Ascending aorta (tissue), 2 donors: ENCODE measurements at regions of chr6 and their contacts with region 1.

Region 1: GRCh38 chr6:158231551-158232315 is 63.6 kb downstream of the GTF2H5 start:
- DNase-seq: peak in 1 of 2 donors; percentile 85
- H3K4me3 ChIP-seq: peak overlapping the region; percentile 84 to 87
- H3K27ac ChIP-seq: peak overlapping the region; percentile 85 to 94
- H3K4me1 ChIP-seq: peaks cover 0 to 5% of the 10 kb centered on the region in 2 donors
- H3K27me3 ChIP-seq: no peaks in the 10 kb centered on the region
- CTCF ChIP-seq: no peak

Region 2: GRCh38 chr6:158170656-158171081 is 61.1 kb before region 1 on chr6:
- intact Hi-C with region 1: loop called (anchors 5 kb)
- DNase-seq: no peak
- H3K4me3 ChIP-seq: peak overlapping the region in 1 of 2 donors; percentile 40
- H3K27ac ChIP-seq: peak overlapping the region; percentile 77 to 80
- H3K4me1 ChIP-seq: peaks cover 11 to 52% of the 10 kb centered on the region in 2 donors
- H3K27me3 ChIP-seq: no peaks in the 10 kb centered on the region
- CTCF ChIP-seq: no peak

Region 3: DNA sequence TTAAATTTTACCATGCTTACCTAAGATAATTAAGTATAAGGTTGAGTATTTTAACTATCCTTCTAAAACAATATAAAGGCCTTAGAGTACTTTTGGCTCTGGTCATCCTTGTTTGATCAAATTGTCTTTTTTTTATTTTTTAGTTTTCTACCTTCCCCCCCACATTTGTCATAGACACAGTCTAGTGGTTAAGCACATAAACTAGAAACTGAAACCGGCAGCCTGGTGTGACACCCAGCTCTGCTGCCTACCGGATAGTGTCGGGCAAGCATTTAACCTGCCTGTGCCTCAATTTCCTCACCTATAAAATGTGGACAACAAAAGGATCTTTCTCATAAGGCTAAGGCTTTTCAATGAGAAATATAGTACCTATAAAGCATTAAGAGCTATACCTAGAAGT is 58.9 kb after region 1 on chr6:
- intact Hi-C with region 1: loop called (anchors 5 kb)
- DNase-seq: no peak
- H3K4me3 ChIP-seq: no peak overlapping the region
- H3K27ac ChIP-seq: no peak overlapping the region
- H3K4me1 ChIP-seq: peaks cover under 1 to 7% of the 10 kb centered on the region in 2 donors
- H3K27me3 ChIP-seq: no peaks in the 10 kb centered on the region
- CTCF ChIP-seq: no peak

Region 4: GRCh38 chr6:158313989-158314388 is 82.3 kb after region 1 on chr6:
- intact Hi-C with region 1: no loop called
- DNase-seq: no peak
- H3K4me3 ChIP-seq: no peak overlapping the region
- H3K27ac ChIP-seq: no peak overlapping the region
- H3K4me1 ChIP-seq: no peaks in the 10 kb centered on the region
- H3K27me3 ChIP-seq: no peaks in the 10 kb centered on the region
- CTCF ChIP-seq: no peak

Region 5: DNA sequence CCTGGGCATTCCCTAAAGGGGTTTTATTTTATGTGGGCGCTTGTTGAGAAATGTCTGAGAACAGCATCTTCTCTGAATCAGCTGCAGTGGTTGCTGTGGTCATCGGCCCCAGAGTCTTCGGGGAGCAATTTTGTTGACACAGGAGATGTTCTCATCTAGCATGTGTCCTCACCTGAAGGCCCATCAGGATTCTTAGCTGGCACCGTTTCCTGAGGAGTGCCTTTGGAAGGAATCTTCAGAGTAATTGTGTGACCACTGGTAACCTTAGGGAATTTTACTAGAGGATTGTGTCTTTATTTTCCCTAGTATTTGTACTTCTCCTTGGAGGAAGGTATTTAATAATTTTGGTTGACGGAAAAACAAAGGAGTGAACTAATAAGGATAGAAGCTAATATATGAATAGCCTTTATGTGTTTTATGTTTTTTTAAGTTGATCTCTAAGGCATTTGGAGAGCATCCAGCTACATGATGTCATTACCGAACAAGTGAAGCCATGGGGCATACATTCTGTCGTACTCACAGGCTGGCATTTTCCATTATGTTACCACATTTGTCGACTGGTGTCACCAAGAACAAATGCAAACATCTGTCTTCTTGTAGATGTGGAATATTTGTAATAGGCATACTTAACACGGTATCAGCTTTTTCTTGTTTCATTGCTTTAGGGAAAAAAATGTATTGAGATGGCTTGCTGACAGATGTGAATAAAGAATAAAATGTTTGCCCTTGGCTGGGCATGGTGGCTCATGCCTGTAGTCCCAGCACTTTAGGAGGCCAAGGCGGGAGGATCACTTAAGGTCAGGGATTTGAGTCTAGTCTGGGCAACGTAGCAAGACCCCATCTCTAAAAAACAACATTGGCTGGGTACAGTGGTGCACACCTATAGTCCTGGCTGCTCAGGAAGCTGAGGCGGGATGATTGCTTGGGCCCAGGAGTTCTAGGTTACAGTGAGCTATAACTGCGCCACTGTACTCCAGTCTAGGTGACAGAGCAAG is 122.4 kb after region 1 on chr6:
- intact Hi-C with region 1: no loop called
- DNase-seq: no peak
- H3K4me3 ChIP-seq: no peak overlapping the region
- H3K27ac ChIP-seq: no peak overlapping the region
- H3K4me1 ChIP-seq: no peaks in the 10 kb centered on the region
- H3K27me3 ChIP-seq: no peaks in the 10 kb centered on the region
- CTCF ChIP-seq: no peak

Region 6: GRCh38 chr6:158377860-158378259 is 146.1 kb after region 1 on chr6:
- intact Hi-C with region 1: no loop called
- DNase-seq: no peak
- H3K4me3 ChIP-seq: no peak overlapping the region
- H3K27ac ChIP-seq: no peak overlapping the region
- H3K4me1 ChIP-seq: peaks cover 0 to 3% of the 10 kb centered on the region in 2 donors
- H3K27me3 ChIP-seq: no peaks in the 10 kb centered on the region
- CTCF ChIP-seq: no peak

Region 7: DNA sequence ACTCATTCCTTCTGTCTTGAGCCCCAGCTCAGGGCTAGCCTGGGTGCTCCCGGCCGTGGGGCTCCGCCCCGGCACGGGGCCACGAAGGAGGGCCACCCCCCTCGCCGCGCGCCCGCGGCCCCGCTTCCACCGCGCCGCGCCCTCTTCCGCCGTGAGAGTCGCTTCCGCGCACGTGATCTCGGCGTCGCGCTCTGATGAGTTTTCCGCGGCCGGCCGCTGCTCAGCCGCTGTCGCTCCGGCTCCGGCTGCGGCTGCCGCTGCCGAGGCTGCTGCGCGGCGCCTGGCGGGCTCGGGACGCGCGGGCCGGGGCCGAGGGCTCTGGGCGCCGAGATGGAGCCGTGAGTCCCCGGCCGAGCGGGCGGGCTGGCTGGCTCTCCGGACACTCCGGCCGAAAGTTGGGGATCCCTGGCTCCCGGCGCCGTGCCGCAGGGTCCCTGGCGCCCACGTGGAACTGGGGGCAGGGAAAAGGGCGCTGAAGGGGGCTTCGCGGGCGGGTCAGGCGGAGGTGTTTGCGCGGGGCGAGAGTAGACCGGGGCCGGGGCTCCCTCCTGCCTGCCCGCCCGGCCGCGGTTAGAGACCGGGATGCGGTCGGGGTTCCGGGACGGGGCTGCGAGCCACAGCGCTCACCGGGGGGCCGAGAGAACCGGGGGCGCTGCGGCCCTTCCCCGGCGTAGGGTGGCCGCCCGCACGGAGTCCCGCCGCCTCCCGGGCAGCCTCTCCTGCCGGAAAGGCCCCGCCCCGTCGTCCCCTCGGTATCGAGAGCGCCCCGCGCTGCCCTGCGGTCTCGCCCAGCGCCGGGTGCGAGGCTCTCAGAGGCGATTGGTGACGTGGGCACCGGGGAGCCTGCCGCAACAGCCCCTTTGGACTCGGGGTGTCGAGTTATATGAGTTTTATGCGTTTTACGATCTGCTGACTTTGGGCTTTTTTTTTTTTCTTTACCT is 328.4 kb after region 1 on chr6 and contains the start of gene TMEM181:
- intact Hi-C with region 1: loop called (anchors 2 kb)
- DNase-seq: peak in 1 of 2 donors; percentile 86
- H3K4me3 ChIP-seq: peak within 1 kb of the TSS; percentile 79 to 97
- H3K27ac ChIP-seq: peak within 1 kb of the TSS; percentile 91 to 93
- H3K4me1 ChIP-seq: peaks cover 7 to 10% of the 10 kb centered on the region in 2 donors
- H3K27me3 ChIP-seq: no peaks in the 10 kb centered on the region
- CTCF ChIP-seq: no peak
- total RNA-seq, gene TMEM181: 16.3 TPM